ENCODE measurements at regions of chr11 and their contacts with region 1.

Region 1: DNA sequence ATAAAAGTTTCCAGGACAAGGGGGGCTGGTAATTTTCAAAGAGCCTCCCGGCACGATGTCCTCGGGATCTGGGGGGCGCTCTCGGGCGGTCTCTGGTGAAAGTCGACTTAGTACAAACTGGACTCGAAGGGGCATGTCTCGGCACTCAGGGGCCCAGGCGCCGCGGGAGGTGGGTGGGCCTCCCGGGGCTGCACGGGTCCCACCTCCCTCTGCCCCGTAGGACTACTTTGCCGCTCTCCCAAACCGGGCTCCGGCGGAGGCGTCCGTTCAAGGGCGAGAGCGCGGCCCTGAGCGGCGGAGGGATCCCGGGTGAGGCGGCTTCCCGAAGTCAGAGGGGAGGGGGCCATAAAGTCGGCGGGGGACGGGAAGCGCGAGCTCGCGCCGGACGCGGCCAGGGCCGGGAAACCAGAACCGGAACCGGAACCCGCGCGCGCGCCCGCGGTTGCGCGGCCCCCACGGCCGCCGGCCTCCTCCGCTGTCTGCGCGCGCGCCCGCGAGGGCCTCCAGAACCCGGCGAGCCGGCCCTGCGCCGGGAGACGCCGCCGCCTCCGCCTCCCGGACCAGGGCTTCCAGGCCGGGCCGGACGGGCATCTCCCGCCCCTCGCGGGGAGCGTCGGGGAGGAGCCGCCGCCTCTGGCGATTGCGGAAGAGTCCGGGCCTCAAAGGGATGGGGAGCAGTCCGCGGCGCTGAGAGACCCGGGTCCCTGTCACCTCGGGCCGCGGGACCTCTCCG is at the start of gene ARHGEF12:
- DNase-seq: peak; percentile 97
- ATAC-seq: peak; percentile 80
- total RNA-seq, gene ARHGEF12: 81.7 TPM

Region 2: GRCh38 chr11:119975561-119976152 is 360.4 kb before region 1 on chr11:
- intact Hi-C with region 1: no loop called
- DNase-seq: peak; percentile 61
- ATAC-seq: peak; percentile 57

Region 3: GRCh38 chr11:120413480-120413879 is 77.4 kb after region 1 on chr11:
- intact Hi-C with region 1: loop called (anchors 5 kb)
- DNase-seq: no peak
- ATAC-seq: no peak

Region 4: GRCh38 chr11:120432056-120433018 is 96.3 kb after region 1 on chr11:
- intact Hi-C with region 1: loop called (anchors 10 kb)
- DNase-seq: no peak
- ATAC-seq: peak; percentile 93

Measured in Right ventricle myocardium superior (tissue), 1 donor.